Mammary epithelial cell (primary cell): ENCODE measurements at regions of chr5 and their contacts with region 1.

Region 1: DNA sequence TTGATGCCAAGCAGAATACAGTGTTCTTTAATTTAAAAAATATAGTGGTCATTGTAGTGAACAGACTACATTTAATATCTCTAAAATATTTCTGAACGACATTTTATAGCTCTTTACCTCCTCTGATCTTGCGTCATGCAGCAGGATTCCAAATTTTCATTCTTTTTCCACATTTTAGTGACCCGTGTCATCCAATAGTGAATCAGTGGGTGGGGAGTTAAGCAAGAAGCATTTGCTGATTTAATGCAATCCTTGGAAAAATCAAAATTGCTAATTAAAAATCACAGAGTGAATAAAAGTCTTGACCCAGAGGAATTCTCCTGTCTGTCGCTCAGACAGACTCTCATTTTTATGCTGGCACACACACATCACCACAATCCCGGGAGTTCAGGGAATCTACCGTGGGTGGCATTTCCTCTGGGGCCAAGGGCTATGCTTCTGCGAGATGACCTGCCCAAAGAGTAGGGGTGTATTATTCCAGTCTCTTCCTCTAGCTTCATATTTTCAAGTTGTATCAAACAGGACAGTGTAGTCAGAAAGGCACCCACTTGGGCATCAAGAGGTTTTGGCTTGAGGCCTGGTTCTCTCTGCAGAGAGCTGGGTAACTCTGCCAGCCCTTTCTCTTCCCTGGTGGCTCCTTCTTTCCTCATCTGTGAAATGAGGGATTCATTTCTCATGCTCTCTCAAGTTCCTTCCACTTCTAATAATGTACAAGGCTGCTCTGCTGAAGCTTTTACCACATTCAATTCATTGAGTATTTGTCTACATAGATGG is 24.8 kb upstream of the OTP start:
- DNase-seq: no peak
- H3K4me3 ChIP-seq: no peak overlapping the region
- H3K27ac ChIP-seq: no peak overlapping the region
- H3K4me1 ChIP-seq: no peaks in the 10 kb centered on the region
- H3K27me3 ChIP-seq: no peaks in the 10 kb centered on the region
- CTCF ChIP-seq: no peak

Region 2: GRCh38 chr5:77586101-77586500 is 77.2 kb before region 1 on chr5:
- CTCF ChIA-PET with region 1: no interaction called
- dilution Hi-C with region 1: loop called (anchors 5 kb)
- in situ Hi-C with region 1: no loop called
- intact Hi-C with region 1: no loop called
- DNase-seq: no peak
- H3K4me3 ChIP-seq: no peak overlapping the region
- H3K27ac ChIP-seq: no peak overlapping the region
- H3K4me1 ChIP-seq: no peaks in the 10 kb centered on the region
- H3K27me3 ChIP-seq: peaks cover 5% of the 10 kb centered on the region
- CTCF ChIP-seq: no peak

Region 3: DNA sequence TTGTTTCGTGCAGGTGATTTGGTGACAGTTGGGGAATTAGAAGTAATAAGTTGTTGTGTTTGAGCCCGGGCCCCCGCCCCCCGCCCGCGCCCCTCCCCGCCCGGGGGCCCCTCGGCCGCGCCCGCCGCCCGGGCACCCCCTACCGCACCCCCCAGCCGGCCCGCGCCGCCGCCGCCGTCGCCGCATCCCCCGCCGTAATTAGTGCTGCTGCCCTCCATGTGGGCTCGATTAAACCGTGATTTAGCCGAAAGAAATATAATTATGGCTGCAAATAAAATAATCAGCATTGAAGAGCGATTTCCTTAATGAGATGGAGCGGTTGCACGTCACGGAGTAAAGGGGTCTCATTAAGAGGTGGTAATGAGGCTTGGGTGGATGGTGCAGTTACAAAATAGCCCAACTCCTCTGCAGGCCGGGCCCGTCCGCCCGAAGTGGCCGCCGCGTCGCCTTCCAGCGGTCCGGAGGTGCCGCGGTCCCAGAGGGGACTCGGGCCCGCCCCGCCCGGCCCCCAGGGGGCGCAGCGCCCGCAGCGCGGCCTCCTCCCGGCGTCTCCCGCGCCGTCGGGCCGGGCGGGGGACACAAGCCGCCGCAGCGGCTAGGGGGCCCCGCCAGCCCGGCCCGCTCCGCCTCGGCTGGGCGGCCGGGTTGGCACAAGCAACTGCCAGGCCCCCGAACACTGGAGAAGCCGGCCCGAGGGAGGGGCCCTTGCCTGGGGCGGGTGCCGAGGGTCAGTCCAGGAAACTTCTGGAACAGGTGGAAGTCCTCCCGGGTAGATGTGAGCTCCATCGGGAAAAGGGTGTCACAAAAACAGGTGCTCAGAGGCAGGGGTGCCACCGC is 17.9 kb before region 1 on chr5:
- CTCF ChIA-PET with region 1: no interaction called
- dilution Hi-C with region 1: no loop called
- in situ Hi-C with region 1: no loop called
- intact Hi-C with region 1: no loop called
- DNase-seq: no peak
- H3K4me3 ChIP-seq: no peak overlapping the region
- H3K27ac ChIP-seq: no peak overlapping the region
- H3K4me1 ChIP-seq: no peaks in the 10 kb centered on the region
- H3K27me3 ChIP-seq: peaks cover 62% of the 10 kb centered on the region
- CTCF ChIP-seq: peak in 1 of 2 donors; percentile 3